GM12878 (cell line): ENCODE measurements at regions of chr17 and their contacts with region 1.

Region 1: DNA sequence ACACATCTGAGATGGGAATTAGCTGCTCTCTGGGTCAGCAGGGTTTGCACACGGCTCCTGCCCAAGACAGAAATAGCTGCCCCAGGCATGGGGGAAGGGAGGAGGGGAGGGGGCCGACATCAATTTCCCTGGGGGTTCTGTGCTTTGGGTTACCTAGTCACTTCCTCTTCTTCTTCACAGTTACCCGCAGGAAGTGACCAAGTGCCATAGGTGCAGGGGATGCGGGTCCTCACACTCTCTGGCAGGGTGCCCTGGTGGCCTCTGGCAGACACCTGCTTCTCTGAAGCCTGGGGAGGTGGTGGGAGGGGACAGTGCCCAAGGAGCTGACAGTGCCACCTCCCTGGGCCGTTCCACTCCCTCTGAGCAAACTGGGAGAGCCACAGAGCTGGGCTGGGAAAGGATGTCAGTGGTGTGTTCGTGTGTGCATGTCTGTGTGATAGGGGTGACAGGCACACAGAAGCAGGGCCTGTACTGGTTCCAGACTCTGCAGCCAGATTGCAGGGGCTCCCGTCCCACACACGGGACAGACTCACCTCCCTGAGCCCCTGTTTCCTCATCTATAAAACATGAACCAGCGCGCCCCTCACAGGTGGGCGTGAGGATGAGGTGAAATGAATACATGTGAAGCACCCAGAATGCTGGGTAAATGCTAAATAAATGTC is 18.2 kb downstream of the SCN4A start:
- DNase-seq: no peak
- ATAC-seq: peak; percentile 86
- H3K4me3 ChIP-seq: no peak overlapping the region
- H3K27ac ChIP-seq: no peak overlapping the region
- H3K4me1 ChIP-seq: peaks cover 14% of the 10 kb centered on the region
- H3K27me3 ChIP-seq: no peaks in the 10 kb centered on the region
- CTCF ChIP-seq: no peak
- EP300 ChIP-seq: no peak
- POLR2A ChIP-seq: no peak
- RAD21 ChIP-seq: no peak

Region 2: GRCh38 chr17:63722403-63722802 is 232.1 kb before region 1 on chr17:
- CTCF ChIA-PET with region 1: no interaction called
- POLR2A ChIA-PET with region 1: no interaction called
- RAD21 ChIA-PET with region 1: no interaction called
- SMC1A ChIA-PET with region 1: no interaction called
- in situ Hi-C with region 1: no loop called
- intact Hi-C with region 1: no loop called
- DNase-seq: no peak
- ATAC-seq: no peak
- H3K4me3 ChIP-seq: no peak overlapping the region
- H3K27ac ChIP-seq: no peak overlapping the region
- H3K4me1 ChIP-seq: no peaks in the 10 kb centered on the region
- H3K27me3 ChIP-seq: no peaks in the 10 kb centered on the region
- CTCF ChIP-seq: no peak
- EP300 ChIP-seq: no peak
- POLR2A ChIP-seq: no peak
- RAD21 ChIP-seq: no peak

Region 3: DNA sequence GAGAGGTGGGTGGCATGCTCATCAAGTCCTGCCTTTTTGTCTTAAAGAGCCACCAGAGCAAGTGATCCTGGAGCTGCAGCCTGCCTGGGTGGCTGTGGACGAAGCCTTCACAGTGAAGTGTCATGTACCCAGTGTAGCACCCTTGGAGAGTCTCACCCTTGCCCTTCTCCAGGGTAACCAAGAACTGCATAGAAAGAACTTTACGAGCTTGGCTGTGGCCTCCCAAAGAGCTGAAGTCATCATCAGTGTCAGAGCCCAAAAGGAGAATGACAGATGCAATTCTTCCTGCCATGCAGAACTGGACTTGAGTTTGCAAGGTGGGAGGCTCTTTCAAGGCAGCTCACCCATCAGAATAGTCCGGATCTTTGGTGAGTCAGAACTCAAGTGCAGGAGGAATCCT is 95.3 kb before region 1 on chr17:
- CTCF ChIA-PET with region 1: no interaction called
- POLR2A ChIA-PET with region 1: no interaction called
- RAD21 ChIA-PET with region 1: no interaction called
- SMC1A ChIA-PET with region 1: no interaction called
- in situ Hi-C with region 1: no loop called
- intact Hi-C with region 1: no loop called
- DNase-seq: no peak
- ATAC-seq: no peak
- H3K4me3 ChIP-seq: no peak overlapping the region
- H3K27ac ChIP-seq: no peak overlapping the region
- H3K4me1 ChIP-seq: no peaks in the 10 kb centered on the region
- H3K27me3 ChIP-seq: peaks cover 1 to 4% of the 10 kb centered on the region in 2 experiments; a peak in 2 of 4 replicates
- CTCF ChIP-seq: no peak
- EP300 ChIP-seq: no peak
- POLR2A ChIP-seq: no peak
- RAD21 ChIP-seq: no peak

Region 4: DNA sequence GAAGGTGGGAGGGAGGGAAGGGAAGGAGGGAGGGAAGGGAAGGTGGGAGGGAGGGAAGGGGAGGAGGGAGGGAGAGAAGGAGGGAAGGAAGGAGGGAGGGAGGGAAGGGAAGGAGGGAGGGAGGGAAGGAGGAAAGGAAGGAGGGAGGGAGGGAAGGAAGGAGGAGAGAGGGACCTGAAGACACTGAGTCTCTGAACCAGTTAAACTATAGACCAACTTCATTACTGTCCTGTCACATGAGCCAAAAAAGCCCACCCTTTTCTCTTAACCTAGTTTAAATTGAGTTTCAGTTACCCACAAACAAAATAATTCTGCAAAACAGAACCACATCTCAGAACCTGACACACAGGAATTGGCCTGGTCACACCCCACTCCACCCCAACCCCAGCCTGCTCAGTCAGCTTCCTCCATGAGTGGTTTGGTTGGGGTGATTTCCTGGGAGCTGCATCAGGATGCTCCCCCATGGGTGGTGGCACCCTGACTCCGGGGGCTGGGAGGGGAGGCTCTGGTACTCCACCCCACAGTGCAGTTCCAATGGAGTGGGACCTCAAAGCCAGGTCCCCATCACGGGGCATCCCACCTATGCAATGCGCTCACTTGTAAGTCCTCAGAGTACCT is 38.9 kb after region 1 on chr17:
- CTCF ChIA-PET with region 1: interaction called, 16 read pairs
- POLR2A ChIA-PET with region 1: interaction called, 4 read pairs
- RAD21 ChIA-PET with region 1: interaction called, 4 read pairs
- SMC1A ChIA-PET with region 1: interaction called, 6 read pairs
- in situ Hi-C with region 1: no loop called
- intact Hi-C with region 1: no loop called
- DNase-seq: no peak
- ATAC-seq: no peak
- H3K4me3 ChIP-seq: no peak overlapping the region
- H3K27ac ChIP-seq: no peak overlapping the region
- H3K4me1 ChIP-seq: peaks cover 4% of the 10 kb centered on the region
- H3K27me3 ChIP-seq: peaks cover 3 to 7% of the 10 kb centered on the region in 2 experiments
- CTCF ChIP-seq: no peak
- EP300 ChIP-seq: no peak
- POLR2A ChIP-seq: no peak
- RAD21 ChIP-seq: no peak

Region 5: DNA sequence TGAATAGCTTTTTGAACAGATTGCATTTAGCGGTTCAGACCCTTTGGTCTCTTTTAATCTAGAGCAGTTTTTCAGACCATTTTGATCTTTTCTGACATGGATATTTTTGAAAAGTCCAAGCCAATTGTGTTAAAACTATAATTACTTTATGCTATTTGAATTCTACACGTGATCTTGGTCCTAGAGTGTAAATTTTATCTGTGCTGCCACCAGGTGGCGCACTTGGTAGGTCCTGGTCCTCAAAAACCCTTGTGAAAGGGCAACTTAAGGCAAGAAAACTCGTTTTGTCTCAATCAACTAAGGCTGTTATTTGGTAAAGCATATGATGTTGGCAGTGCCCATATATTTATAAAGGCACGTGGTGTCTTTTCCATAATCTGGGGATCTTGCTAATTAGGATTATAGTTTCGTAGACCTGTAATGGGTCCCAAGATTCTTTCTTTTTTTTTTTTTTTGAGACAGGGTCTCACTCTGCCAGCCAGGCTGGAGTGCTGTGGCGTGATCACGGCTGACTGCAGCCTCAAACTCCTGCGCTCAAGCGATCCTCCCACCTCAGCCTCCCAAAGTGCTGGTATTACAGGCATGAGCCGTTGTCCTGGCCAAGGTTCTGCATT is 352.4 kb after region 1 on chr17:
- CTCF ChIA-PET with region 1: no interaction called
- POLR2A ChIA-PET with region 1: no interaction called
- RAD21 ChIA-PET with region 1: no interaction called
- SMC1A ChIA-PET with region 1: no interaction called
- in situ Hi-C with region 1: no loop called
- intact Hi-C with region 1: no loop called
- DNase-seq: no peak
- ATAC-seq: peak; percentile 83
- H3K4me3 ChIP-seq: no peak overlapping the region
- H3K27ac ChIP-seq: no peak overlapping the region
- H3K4me1 ChIP-seq: no peaks in the 10 kb centered on the region
- H3K27me3 ChIP-seq: no peaks in the 10 kb centered on the region
- CTCF ChIP-seq: peak; percentile 64 to 86 (median 84)
- EP300 ChIP-seq: no peak
- POLR2A ChIP-seq: no peak
- RAD21 ChIP-seq: peak; percentile 68